Panc1 (cell line): ENCODE measurements at regions of chr4 and their contacts with region 1.

Region 1: GRCh38 chr4:185005216-185005819 is 13.0 kb upstream of the HELT start:
- DNase-seq: peak; percentile 41
- ATAC-seq: peak; percentile 98
- H3K4me3 ChIP-seq: peak overlapping the region; percentile 9 to 37; a peak in 2 of 4 replicates
- H3K27ac ChIP-seq: no peak overlapping the region
- H3K4me1 ChIP-seq: no peaks in the 10 kb centered on the region
- H3K27me3 ChIP-seq: no peaks in the 10 kb centered on the region
- CTCF ChIP-seq: peak; percentile 89

Region 2: DNA sequence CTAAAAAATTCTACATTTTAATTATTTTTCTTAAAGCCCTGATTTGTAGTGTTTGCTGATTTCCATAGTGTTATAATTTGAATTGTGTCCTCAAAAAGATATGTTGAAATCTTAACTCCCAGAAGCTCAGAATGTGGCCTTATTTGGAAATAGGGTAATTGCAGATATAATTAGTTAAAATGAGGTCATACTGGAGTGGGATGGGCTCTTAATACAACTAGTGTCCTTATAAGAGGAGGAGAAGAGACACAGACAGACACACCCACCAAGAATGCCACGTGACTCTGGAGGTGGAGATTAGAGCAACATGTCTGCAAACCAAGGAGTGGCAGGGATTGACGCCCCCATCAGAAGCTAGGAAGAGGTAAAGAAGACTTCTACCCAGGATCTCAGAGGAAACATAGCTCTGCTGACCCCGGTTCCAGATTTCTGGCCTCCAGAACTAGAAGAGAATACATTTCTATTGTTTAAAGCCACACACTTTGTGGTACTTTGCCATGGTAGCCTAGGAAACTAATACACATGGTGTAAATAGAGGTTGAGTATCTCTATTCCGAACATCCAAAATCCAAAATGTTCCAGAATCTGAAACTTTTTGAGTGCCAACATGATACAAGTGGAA is 460.4 kb before region 1 on chr4:
- CTCF ChIA-PET with region 1: no interaction called
- POLR2A ChIA-PET with region 1: no interaction called
- in situ Hi-C with region 1: no loop called
- intact Hi-C with region 1: no loop called
- DNase-seq: no peak
- ATAC-seq: no peak
- H3K4me3 ChIP-seq: no peak overlapping the region
- H3K27ac ChIP-seq: no peak overlapping the region
- H3K4me1 ChIP-seq: no peaks in the 10 kb centered on the region
- H3K27me3 ChIP-seq: no peaks in the 10 kb centered on the region
- CTCF ChIP-seq: no peak

Region 3: DNA sequence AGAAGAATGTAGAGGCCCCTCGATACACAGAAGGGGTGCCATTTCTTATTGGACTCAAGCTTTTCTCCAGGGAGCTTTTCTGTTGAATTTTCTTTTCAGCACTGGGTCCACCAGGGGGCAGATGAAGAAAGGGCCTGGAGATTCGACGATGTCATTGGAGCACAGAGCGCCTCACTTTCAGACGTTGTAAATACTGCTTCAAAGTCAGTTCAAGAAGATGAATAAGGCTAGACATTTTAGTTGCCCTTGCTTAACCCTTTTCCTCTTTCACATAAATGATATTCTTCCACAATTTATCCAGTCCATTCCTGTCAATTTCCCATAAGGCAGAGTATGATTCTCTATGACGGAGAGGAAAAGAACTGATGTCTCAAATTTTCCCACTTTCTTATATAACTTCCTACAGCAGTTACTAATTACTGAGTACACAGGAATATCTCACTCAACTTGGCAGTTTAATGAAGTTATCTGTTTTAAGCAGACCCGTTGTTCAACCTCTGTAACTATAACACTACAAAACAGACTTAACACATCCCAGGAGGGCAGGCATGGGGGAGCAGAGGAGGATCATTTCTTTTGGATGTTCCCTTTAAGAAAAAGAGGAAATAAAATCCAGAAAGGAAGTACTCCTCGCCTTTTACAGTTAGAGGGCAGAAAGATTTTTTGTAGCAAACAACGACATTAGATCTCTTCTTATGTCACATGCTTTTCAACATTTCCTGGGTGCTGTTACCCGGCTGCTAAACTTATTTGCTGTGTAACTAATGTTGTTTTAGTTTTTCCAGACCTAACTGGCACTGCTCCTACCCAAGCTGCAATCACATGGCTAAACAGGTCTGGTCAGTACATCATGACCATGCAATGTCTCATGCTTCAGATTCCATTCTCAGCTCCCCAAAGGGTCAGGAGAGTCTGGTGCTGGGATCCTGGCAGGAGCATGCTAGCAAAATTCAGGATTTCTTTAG is 259.2 kb before region 1 on chr4:
- CTCF ChIA-PET with region 1: no interaction called
- POLR2A ChIA-PET with region 1: no interaction called
- in situ Hi-C with region 1: no loop called
- intact Hi-C with region 1: loop called (anchors 10 kb)
- DNase-seq: peak; percentile 43
- ATAC-seq: peak; percentile 87
- H3K4me3 ChIP-seq: no peak overlapping the region
- H3K27ac ChIP-seq: no peak overlapping the region
- H3K4me1 ChIP-seq: no peaks in the 10 kb centered on the region
- H3K27me3 ChIP-seq: no peaks in the 10 kb centered on the region
- CTCF ChIP-seq: peak; percentile 82

Region 4: DNA sequence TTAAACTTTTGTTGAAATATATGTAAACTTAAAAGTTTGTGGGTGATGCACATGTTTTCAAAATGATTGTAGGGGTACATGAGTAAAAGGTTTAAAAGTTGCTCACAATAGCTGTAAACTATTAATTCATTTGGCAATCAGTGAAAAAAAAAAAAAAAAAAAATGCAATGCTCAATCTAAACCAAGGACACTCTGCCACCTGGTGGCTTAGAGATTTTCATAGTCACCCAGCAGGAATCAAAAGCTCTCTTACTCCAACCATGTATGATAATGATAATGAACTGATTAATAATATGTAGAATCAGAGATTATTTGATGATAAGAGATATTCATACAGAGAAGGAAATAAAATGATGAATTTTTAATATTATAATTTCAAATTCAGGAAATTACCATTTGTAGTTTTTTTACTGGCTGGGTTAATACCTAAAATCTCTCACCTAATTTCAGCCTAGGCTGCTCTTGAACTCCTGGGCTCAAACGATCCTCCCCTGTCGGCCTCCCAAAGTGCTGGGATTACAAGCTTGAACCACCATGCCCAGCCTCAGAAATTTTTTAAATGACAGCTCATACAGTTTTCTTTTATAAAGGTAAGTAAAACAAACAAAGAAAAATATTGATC is 90.8 kb after region 1 on chr4:
- CTCF ChIA-PET with region 1: interaction called, 6 read pairs
- POLR2A ChIA-PET with region 1: no interaction called
- in situ Hi-C with region 1: no loop called
- intact Hi-C with region 1: loop called (anchors 2 kb)
- DNase-seq: no peak
- ATAC-seq: no peak
- H3K4me3 ChIP-seq: no peak overlapping the region
- H3K27ac ChIP-seq: no peak overlapping the region
- H3K4me1 ChIP-seq: no peaks in the 10 kb centered on the region
- H3K27me3 ChIP-seq: no peaks in the 10 kb centered on the region; the same call in 1 of the 2 replicates
- CTCF ChIP-seq: peak; percentile 60; the same call in 1 of the 2 replicates

Region 5: DNA sequence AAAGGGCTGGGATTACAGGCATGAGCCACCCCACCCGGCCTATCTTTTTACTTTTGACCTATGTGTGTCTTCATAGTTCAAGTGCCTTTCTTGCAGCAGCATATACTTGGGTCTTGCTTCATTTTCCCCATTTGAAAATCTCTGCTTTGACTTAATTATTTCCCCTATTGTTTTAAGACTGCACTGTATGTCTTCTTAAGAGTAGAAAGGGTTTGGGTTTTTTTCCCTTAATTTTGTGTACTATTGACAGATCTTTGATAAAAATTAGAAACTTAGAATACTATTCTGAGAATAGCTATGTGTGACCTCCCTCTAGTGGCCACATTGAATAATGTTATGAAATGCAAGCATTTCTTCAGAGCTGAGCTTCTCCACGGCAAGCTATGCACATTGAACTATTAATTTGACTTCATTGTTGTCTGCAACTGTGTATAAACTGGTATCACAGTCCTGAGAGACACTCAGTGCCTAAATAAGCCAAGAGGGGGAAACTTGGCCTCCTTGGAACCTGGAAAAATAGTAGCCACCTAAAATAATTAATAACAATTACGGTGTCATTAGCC is 129.1 kb after region 1 on chr4:
- CTCF ChIA-PET with region 1: interaction called, 6 read pairs
- POLR2A ChIA-PET with region 1: no interaction called
- in situ Hi-C with region 1: no loop called
- intact Hi-C with region 1: loop called (anchors 1 kb)
- DNase-seq: no peak
- ATAC-seq: peak; percentile 90
- H3K4me3 ChIP-seq: no peak overlapping the region
- H3K27ac ChIP-seq: no peak overlapping the region
- H3K4me1 ChIP-seq: no peaks in the 10 kb centered on the region
- H3K27me3 ChIP-seq: no peaks in the 10 kb centered on the region
- CTCF ChIP-seq: peak; percentile 65; the same call in 1 of the 2 replicates